ENCODE measurements at regions of chrX and their contacts with region 1.

Region 1: GRCh38 chrX:48966796-48967579 is 4.7 kb downstream of the KCND1 start:
- DNase-seq: no peak
- H3K4me3 Mint-ChIP-seq: no peak overlapping the region
- H3K27ac Mint-ChIP-seq: no peak overlapping the region
- H3K4me1 Mint-ChIP-seq: peaks cover 3% of the 10 kb centered on the region
- H3K27me3 Mint-ChIP-seq: no peaks in the 10 kb centered on the region

Region 2: GRCh38 chrX:48752505-48752904 is 214.5 kb before region 1 on chrX:
- CTCF ChIA-PET with region 1: no interaction called
- intact Hi-C with region 1: no loop called
- DNase-seq: no peak
- H3K4me3 Mint-ChIP-seq: no peak overlapping the region
- H3K27ac Mint-ChIP-seq: no peak overlapping the region
- H3K4me1 Mint-ChIP-seq: peaks cover 6% of the 10 kb centered on the region
- H3K27me3 Mint-ChIP-seq: no peaks in the 10 kb centered on the region

Region 3: DNA sequence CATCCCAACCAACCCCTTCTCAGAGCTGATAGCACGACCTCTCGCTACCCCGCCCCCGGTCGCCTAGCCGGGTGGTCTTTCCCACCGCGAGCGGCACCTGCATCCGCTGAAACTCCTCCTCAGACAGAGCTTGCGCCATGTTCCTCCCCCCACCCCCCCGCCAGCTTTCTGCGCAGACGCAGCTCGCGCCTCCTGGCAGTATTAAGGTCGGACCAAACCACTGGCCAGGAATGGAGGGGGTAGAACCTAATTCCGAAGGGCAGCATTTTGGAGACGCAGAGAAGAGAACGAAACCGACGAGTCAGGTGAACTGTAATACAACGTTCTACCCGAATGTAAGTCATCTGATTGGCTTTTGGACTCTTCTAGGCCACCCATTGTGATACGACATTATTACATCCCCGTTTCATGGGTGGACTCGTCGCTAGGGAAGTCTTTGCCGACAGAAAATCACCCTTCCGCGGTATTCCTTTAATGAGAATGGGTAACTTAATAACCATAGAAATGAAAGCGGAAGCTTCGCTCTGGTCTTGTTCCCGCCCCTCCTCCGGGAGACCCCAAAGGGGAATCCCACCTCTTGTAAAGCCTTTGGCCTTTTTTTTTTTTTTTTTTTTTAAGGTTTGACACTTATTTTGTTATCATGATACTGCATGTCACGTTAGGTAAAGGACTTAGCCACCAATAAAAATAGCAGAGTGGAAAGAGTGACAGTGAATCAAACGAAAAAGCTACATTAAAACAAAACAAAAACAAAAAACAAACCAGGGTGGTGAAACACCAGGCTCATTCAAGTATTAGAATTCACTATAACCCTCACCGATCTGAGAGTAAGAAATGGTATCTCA is 35.3 kb after region 1 on chrX and contains the start of gene GRIPAP1:
- CTCF ChIA-PET with region 1: interaction called, 4 read pairs
- intact Hi-C with region 1: loop called (anchors 2 kb)
- DNase-seq: peak; percentile 85
- H3K4me3 Mint-ChIP-seq: peak within 1 kb of the TSS; percentile 99
- H3K27ac Mint-ChIP-seq: peak within 1 kb of the TSS; percentile 97
- H3K4me1 Mint-ChIP-seq: peaks cover 37% of the 10 kb centered on the region
- H3K27me3 Mint-ChIP-seq: no peaks in the 10 kb centered on the region
- total RNA-seq, gene GRIPAP1: 64.8 to 73.1 TPM

Measured in activated naive CD4-positive, alpha-beta T cell treated with anti-CD3 and anti-CD28 coated beads for 36 hours (primary cell).